Sigmoid colon (tissue), 7 donors: ENCODE measurements at regions of chrX and their contacts with region 1.

Region 1: GRCh38 chrX:12138361-12139313 is at the start of gene FRMPD4:
- DNase-seq: peak; percentile 76
- H3K4me3 ChIP-seq: peak within 1 kb of the TSS; percentile 39 to 57 (median 50)
- H3K27ac ChIP-seq: peak within 1 kb of the TSS in 3 of 4 donors; percentile 47 to 63 (median 53)
- H3K4me1 ChIP-seq: no peaks in the 10 kb centered on the region
- H3K27me3 ChIP-seq: no peaks in the 10 kb centered on the region
- CTCF ChIP-seq: peak in 2 of 4 experiments; percentile 12 to 34
- EP300 ChIP-seq: no peak
- POLR2A ChIP-seq: no peak
- total RNA-seq, gene FRMPD4: 1.4 to 5.8 (median 3.9) TPM

Region 2: GRCh38 chrX:12319003-12319519 is 180.4 kb after region 1 on chrX:
- intact Hi-C with region 1: loop called (anchors 5 kb)
- DNase-seq: no peak
- H3K4me3 ChIP-seq: no peak overlapping the region
- H3K27ac ChIP-seq: no peak overlapping the region
- H3K4me1 ChIP-seq: no peaks in the 10 kb centered on the region
- H3K27me3 ChIP-seq: no peaks in the 10 kb centered on the region
- CTCF ChIP-seq: no peak
- EP300 ChIP-seq: no peak
- POLR2A ChIP-seq: no peak

Region 3: GRCh38 chrX:12360383-12360782 is 221.7 kb after region 1 on chrX:
- intact Hi-C with region 1: no loop called
- DNase-seq: no peak
- H3K4me3 ChIP-seq: no peak overlapping the region
- H3K27ac ChIP-seq: no peak overlapping the region
- H3K4me1 ChIP-seq: no peaks in the 10 kb centered on the region
- H3K27me3 ChIP-seq: peaks cover 0 to 4% (median 0%) of the 10 kb centered on the region in 3 donors
- CTCF ChIP-seq: no peak
- EP300 ChIP-seq: no peak
- POLR2A ChIP-seq: no peak

Region 4: GRCh38 chrX:12463052-12463451 is 324.4 kb after region 1 on chrX:
- intact Hi-C with region 1: no loop called
- DNase-seq: no peak
- H3K4me3 ChIP-seq: no peak overlapping the region
- H3K27ac ChIP-seq: no peak overlapping the region
- H3K4me1 ChIP-seq: no peaks in the 10 kb centered on the region
- H3K27me3 ChIP-seq: no peaks in the 10 kb centered on the region
- CTCF ChIP-seq: no peak
- EP300 ChIP-seq: no peak
- POLR2A ChIP-seq: no peak

Region 5: GRCh38 chrX:12526296-12526695 is 387.7 kb after region 1 on chrX:
- intact Hi-C with region 1: no loop called
- DNase-seq: no peak
- H3K4me3 ChIP-seq: no peak overlapping the region
- H3K27ac ChIP-seq: no peak overlapping the region
- H3K4me1 ChIP-seq: no peaks in the 10 kb centered on the region
- H3K27me3 ChIP-seq: no peaks in the 10 kb centered on the region
- CTCF ChIP-seq: no peak
- EP300 ChIP-seq: no peak
- POLR2A ChIP-seq: no peak

Region 6: DNA sequence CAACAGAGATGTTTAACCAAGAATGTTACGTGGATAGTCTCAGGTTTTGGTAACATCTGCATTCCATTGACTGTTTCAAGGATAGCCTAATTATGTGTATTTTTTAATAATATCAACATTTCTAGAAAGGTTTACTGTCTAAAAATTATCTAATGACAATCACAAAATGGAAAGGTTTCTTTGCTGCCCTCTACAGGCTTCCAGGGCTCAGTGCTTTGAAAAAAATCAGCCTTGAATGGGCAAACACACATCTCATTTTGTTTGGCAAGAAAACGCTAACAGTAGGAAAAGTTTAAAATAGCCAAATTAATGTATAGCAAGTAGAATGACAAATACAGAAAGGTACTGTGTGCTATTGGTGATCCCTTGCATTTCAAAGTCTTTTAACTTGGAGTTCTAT is 429.2 kb after region 1 on chrX:
- intact Hi-C with region 1: loop called (anchors 5 kb)
- DNase-seq: no peak
- H3K4me3 ChIP-seq: no peak overlapping the region
- H3K27ac ChIP-seq: no peak overlapping the region
- H3K4me1 ChIP-seq: no peaks in the 10 kb centered on the region
- H3K27me3 ChIP-seq: no peaks in the 10 kb centered on the region
- CTCF ChIP-seq: peak in 2 of 4 experiments; percentile 19 to 48
- EP300 ChIP-seq: no peak
- POLR2A ChIP-seq: no peak